PC-9 (cell line): ENCODE measurements at regions of chr10 and their contacts with region 1.

Region 1: GRCh38 chr10:63166742-63167258 is 33.7 kb downstream of the NRBF2 start:
- DNase-seq: peak; percentile 27 to 60
- H3K4me3 ChIP-seq: no peak overlapping the region
- H3K27ac ChIP-seq: no peak overlapping the region
- H3K4me1 ChIP-seq: no peaks in the 10 kb centered on the region
- H3K27me3 ChIP-seq: no peaks in the 10 kb centered on the region
- CTCF ChIP-seq: peak; percentile 90

Region 2: DNA sequence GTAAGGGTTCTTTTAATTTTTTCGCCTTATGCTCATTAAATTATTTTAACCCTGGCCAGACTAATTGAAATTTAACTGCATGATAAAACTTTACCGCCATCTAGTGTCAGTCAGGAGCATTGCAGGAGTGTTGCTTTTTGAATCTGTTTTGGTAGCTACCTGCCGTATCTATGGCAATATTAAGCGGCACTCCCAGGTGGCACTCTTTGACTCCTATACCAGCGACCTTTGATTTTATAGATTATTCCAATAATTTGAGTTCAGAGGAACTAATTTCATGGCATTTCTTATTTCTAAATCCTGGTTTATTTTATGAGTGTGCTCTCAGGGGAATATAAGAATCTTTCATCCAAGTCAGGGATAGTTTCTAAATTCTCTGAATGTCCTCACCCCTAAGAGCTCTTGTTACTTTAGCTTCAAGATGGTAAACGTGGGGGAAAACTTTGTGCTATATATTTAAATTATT is 553.3 kb after region 1 on chr10:
- CTCF ChIA-PET with region 1: interaction called, 35 read pairs
- POLR2A ChIA-PET with region 1: interaction called, 3 read pairs
- intact Hi-C with region 1: loop called (anchors 1 kb)
- DNase-seq: peak; percentile 53 to 65
- H3K4me3 ChIP-seq: no peak overlapping the region
- H3K27ac ChIP-seq: no peak overlapping the region
- H3K4me1 ChIP-seq: peaks cover 4% of the 10 kb centered on the region; the same call in 1 of the 2 replicates
- H3K27me3 ChIP-seq: no peaks in the 10 kb centered on the region
- CTCF ChIP-seq: peak; percentile 100

Region 3: DNA sequence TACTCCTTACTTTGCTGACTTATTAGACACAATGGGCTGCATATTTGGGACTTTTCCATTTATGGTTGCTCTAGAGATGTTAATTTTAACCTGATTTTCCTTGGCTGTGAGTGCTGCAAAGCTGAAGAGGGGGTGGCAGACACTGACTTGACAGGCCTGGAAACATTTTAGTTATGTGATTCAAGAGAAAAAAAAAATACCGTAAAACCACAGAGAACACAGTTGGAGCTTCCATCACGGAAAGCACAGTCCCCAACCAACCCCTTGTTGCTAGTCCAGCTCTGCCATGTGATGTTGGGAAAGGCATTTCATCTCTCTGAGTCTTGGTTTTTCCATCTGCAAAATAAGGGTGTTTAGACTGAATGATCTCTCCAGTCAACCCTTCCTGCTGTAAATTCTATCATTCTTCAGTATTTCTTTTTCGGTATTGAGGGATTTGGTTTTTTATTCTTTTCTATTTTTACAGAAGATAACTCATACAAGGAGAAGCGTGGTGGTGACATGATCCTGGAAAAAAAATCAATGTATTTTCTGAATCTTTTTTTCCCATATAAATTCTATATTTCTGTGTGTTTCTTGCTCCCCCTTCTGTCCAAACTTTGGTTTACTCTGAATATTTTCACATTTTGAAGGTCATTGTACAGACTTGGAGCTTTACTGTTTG is 600.5 kb after region 1 on chr10:
- CTCF ChIA-PET with region 1: interaction called, 6 read pairs
- POLR2A ChIA-PET with region 1: no interaction called
- intact Hi-C with region 1: loop called (anchors 1 kb)
- DNase-seq: no peak
- H3K4me3 ChIP-seq: no peak overlapping the region
- H3K27ac ChIP-seq: no peak overlapping the region
- H3K4me1 ChIP-seq: no peaks in the 10 kb centered on the region
- H3K27me3 ChIP-seq: no peaks in the 10 kb centered on the region
- CTCF ChIP-seq: peak; percentile 71